Left ventricle myocardium inferior (tissue), 1 donor: ENCODE measurements at regions of chr7 and their contacts with region 1.

Region 1: DNA sequence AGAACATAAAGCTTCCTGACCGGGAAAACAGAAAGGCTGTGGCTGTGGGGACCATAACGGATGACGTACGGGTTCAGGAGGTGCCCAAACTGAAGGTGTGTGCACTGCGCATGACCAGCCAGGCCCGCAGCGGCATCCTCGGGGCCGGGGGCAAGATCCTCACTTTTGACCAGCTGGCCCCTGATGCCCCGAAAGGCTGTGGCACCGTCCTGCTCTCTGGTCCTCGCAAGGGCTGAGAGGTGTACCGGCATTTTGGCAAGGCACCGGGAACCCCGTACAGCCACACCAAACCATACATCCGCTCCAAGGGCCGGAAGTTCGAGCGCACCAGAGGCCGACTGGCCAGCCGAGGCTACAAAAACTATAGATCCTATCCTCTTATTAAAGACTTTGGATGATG is 179.3 kb downstream of the PTN start:
- DNase-seq: no peak
- H3K4me3 ChIP-seq: no peak overlapping the region
- H3K27ac ChIP-seq: no peak overlapping the region
- H3K4me1 ChIP-seq: no peaks in the 10 kb centered on the region
- H3K27me3 ChIP-seq: no peaks in the 10 kb centered on the region
- CTCF ChIP-seq: no peak

Region 2: GRCh38 chr7:136883046-136883445 is 281.2 kb before region 1 on chr7:
- intact Hi-C with region 1: no loop called
- DNase-seq: no peak
- H3K4me3 ChIP-seq: no peak overlapping the region
- H3K27ac ChIP-seq: peak overlapping the region; percentile 82
- H3K4me1 ChIP-seq: peaks cover 63% of the 10 kb centered on the region
- H3K27me3 ChIP-seq: no peaks in the 10 kb centered on the region
- CTCF ChIP-seq: no peak

Region 3: DNA sequence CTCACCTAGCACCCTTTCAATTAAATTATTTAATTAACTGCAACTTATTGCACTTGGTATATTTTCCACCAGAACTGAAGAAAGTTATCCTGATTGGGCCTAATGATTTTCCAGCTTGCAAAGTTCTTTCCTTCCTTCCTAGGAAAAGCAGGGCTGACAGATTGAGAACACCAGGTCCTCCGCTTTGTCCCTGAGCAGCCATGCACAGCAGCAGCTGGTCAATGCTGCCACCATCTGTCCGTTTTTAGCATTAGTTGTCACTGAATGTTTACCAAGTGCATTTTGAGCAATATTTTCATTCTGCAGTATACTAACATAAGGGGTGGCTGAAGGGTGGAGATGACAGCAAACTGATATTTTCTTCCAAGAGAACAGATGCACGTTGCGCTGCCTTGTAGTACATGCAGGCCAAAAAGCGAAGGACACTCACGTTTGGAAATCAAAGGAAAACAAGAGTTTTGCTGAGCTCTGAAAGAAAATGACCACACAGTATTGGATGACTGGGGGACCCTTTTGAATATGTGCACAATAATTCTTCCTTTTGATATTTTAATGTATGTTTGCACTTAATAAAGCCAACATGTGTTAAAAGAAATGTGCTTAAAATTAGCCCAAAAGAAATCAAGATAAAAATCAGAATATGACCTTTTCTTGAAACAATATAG is 428.1 kb after region 1 on chr7:
- intact Hi-C with region 1: loop called (anchors 5 kb)
- DNase-seq: peak; percentile 36
- H3K4me3 ChIP-seq: no peak overlapping the region
- H3K27ac ChIP-seq: no peak overlapping the region
- H3K4me1 ChIP-seq: peaks cover 10% of the 10 kb centered on the region
- H3K27me3 ChIP-seq: no peaks in the 10 kb centered on the region
- CTCF ChIP-seq: peak; percentile 79